Activated CD8-positive, alpha-beta T cell treated with anti-CD3 and anti-CD28 coated beads, Interleukin-2, amount 10 ng/mL, durations not matched to agents 7 days and 5 days (primary cell): ENCODE measurements at regions of chr7 and their contacts with region 1.

Region 1: GRCh38 chr7:16564909-16565426 is 38.3 kb downstream of the LRRC72 start:
- DNase-seq: peak; percentile 31
- ATAC-seq: peak; percentile 62
- H3K4me3 Mint-ChIP-seq: no peak overlapping the region
- H3K27ac Mint-ChIP-seq: no peak overlapping the region
- H3K4me1 Mint-ChIP-seq: peaks cover 21% of the 10 kb centered on the region
- H3K27me3 Mint-ChIP-seq: peaks cover 3% of the 10 kb centered on the region

Region 2: GRCh38 chr7:16078076-16078952 is 486.7 kb before region 1 on chr7:
- CTCF ChIA-PET with region 1: interaction called, 32 read pairs
- POLR2A ChIA-PET with region 1: no interaction called
- DNase-seq: peak; percentile 29
- ATAC-seq: no peak
- H3K4me3 Mint-ChIP-seq: no peak overlapping the region
- H3K27ac Mint-ChIP-seq: no peak overlapping the region
- H3K4me1 Mint-ChIP-seq: peaks cover 3% of the 10 kb centered on the region
- H3K27me3 Mint-ChIP-seq: no peaks in the 10 kb centered on the region

Region 3: GRCh38 chr7:16409777-16410176 is 155.2 kb before region 1 on chr7:
- CTCF ChIA-PET with region 1: interaction called, 14 read pairs
- POLR2A ChIA-PET with region 1: no interaction called
- DNase-seq: no peak
- ATAC-seq: no peak
- H3K4me3 Mint-ChIP-seq: no peak overlapping the region
- H3K27ac Mint-ChIP-seq: no peak overlapping the region
- H3K4me1 Mint-ChIP-seq: no peaks in the 10 kb centered on the region
- H3K27me3 Mint-ChIP-seq: no peaks in the 10 kb centered on the region

Region 4: GRCh38 chr7:16420649-16421332 is 144.2 kb before region 1 on chr7:
- CTCF ChIA-PET with region 1: interaction called, 29 read pairs
- POLR2A ChIA-PET with region 1: interaction called, 4 read pairs
- DNase-seq: peak; percentile 92
- ATAC-seq: peak; percentile 95
- H3K4me3 Mint-ChIP-seq: peak overlapping the region; percentile 91
- H3K27ac Mint-ChIP-seq: peak overlapping the region; percentile 98
- H3K4me1 Mint-ChIP-seq: peaks cover 24% of the 10 kb centered on the region
- H3K27me3 Mint-ChIP-seq: no peaks in the 10 kb centered on the region

Region 5: DNA sequence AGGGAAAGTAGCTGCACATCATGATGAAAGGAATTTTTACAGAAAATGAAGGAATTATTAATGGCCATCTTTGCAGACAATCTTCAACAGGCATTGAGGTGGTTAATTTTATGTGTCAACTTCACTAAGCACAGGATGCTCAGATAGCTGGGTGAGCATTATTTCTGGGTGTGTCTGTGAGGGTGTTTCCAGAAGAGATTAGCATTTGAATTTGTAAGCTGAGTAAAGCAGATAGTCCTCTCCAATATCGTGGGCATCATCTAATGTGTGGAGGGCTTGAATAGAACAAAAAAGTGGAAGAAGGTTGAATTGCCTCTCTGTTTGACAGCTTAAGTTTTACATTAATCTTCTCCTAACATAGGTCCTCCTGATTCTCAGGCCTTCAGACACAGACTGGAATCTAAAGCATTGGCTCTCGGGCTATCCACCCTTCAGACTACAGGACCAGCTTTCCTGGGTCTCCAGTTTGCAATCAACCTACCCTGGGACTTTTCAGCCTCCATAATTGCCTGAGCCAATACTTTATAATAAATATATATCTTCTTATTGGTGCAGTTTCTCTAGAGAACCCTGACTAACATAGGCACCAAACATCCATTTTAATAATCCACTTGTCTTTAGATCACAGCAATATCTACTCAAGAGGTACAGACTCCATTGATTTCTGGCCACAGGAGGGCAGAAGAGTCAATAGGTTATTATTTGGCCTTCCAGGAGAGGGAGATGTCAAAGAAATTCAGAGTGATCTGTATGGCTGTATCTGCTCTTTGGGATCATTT is 133.1 kb before region 1 on chr7:
- CTCF ChIA-PET with region 1: interaction called, 83 read pairs
- POLR2A ChIA-PET with region 1: interaction called, 4 read pairs
- DNase-seq: peak; percentile 52
- ATAC-seq: peak; percentile 73
- H3K4me3 Mint-ChIP-seq: no peak overlapping the region
- H3K27ac Mint-ChIP-seq: no peak overlapping the region
- H3K4me1 Mint-ChIP-seq: no peaks in the 10 kb centered on the region
- H3K27me3 Mint-ChIP-seq: no peaks in the 10 kb centered on the region

Region 6: GRCh38 chr7:16554518-16555236 is 10.3 kb before region 1 on chr7:
- CTCF ChIA-PET with region 1: interaction called, 22 read pairs
- POLR2A ChIA-PET with region 1: interaction called, 3 read pairs
- DNase-seq: no peak
- ATAC-seq: no peak
- H3K4me3 Mint-ChIP-seq: no peak overlapping the region
- H3K27ac Mint-ChIP-seq: no peak overlapping the region
- H3K4me1 Mint-ChIP-seq: no peaks in the 10 kb centered on the region
- H3K27me3 Mint-ChIP-seq: peaks cover 3% of the 10 kb centered on the region

Region 7: GRCh38 chr7:16603633-16604032 is 38.7 kb after region 1 on chr7:
- CTCF ChIA-PET with region 1: interaction called, 10 read pairs
- POLR2A ChIA-PET with region 1: no interaction called
- DNase-seq: no peak
- ATAC-seq: peak; percentile 42
- H3K4me3 Mint-ChIP-seq: no peak overlapping the region
- H3K27ac Mint-ChIP-seq: no peak overlapping the region
- H3K4me1 Mint-ChIP-seq: no peaks in the 10 kb centered on the region
- H3K27me3 Mint-ChIP-seq: no peaks in the 10 kb centered on the region